ENCODE measurements at regions of chr17 and their contacts with region 1.

Region 1: GRCh38 chr17:41738077-41738735 is 3.8 kb upstream of the HAP1 start:
- DNase-seq: peak; percentile 86
- ATAC-seq: peak; percentile 94
- H3K4me3 ChIP-seq: no peak overlapping the region
- H3K27ac ChIP-seq: no peak overlapping the region
- H3K4me1 ChIP-seq: peaks cover 19% of the 10 kb centered on the region
- H3K27me3 ChIP-seq: peaks cover 34% of the 10 kb centered on the region
- CTCF ChIP-seq: peak; percentile 99

Region 2: DNA sequence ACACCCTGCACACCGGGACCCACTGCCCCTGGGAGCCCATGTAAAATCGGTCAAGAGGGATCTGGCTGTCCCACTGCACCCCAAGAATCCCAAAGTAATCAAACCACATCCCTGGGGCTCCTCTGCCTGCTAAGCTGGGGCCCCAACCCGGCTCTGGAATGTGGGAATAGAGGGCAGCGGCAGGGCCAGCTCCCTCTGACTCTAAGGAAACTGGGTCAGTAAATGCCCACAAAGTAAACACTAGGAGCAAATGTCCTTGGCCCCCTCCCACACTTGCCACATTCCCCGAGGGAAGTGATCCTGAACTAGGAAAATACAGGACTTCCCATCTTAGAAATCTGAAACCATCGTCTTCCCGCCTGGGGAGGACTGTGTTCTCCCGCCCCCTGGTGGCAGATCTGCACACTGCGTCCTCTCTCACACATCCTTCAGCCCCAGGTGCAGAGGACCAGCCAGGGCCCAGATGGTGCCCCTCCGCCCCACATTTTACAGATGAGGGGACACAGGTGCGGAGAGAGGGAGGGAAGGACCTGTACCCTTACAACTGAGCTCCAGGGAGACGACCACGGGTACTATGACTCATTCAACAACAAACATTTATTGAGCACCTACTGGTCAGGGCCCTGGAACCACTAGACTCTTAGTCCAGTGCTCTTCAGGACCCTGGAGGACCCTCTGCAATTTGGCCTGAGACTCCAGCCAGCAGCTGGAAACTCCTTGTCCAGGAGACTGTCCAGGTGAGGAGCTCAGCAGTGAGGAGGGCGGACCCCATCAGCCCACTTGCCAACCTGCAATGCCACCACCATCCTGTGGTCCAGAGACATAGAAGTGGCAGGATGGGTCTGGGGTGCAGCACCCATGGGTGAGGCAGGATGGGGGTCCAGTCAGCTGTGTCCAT is 63.4 kb after region 1 on chr17:
- intact Hi-C with region 1: loop called (anchors 2 kb)
- DNase-seq: peak; percentile 89
- ATAC-seq: peak; percentile 87
- H3K4me3 ChIP-seq: no peak overlapping the region
- H3K27ac ChIP-seq: peak overlapping the region; percentile 18
- H3K4me1 ChIP-seq: peaks cover 10% of the 10 kb centered on the region
- H3K27me3 ChIP-seq: no peaks in the 10 kb centered on the region
- CTCF ChIP-seq: peak; percentile 98